ENCODE measurements at regions of chr9 and their contacts with region 1.

Region 1: GRCh38 chr9:86222667-86223066 is 36.8 kb downstream of the C9orf153 start:
- DNase-seq: no peak
- ATAC-seq: no peak
- H3K4me3 ChIP-seq: no peak overlapping the region
- H3K4me3 Mint-ChIP-seq: no peak overlapping the region
- H3K27ac ChIP-seq: no peak overlapping the region
- H3K27ac Mint-ChIP-seq: no peak overlapping the region
- H3K4me1 ChIP-seq: no peaks in the 10 kb centered on the region
- H3K4me1 Mint-ChIP-seq: no peaks in the 10 kb centered on the region
- H3K27me3 ChIP-seq: no peaks in the 10 kb centered on the region
- H3K27me3 Mint-ChIP-seq: peaks cover 2% of the 10 kb centered on the region
- CTCF ChIP-seq: no peak

Region 2: DNA sequence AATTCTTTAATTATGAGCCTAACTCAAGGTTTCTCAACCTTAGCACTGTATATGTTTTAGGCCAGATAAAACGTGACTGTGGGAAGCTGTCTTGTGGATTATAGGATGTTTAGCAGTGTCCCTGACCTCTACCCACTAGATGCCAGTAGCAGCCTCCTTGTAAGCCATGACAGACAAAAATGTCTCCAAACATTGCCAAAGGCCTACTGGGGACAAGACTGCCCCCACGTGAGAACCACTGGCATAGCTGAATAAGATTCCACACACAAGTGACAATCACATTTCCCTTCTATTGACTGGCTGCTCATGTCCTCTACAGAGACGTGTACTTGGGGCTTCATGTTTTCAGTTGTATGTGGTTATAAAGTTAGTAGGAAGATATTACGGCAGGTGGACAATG is 178.7 kb before region 1 on chr9:
- CTCF ChIA-PET with region 1: no interaction called
- POLR2A ChIA-PET with region 1: no interaction called
- intact Hi-C with region 1: no loop called
- DNase-seq: peak in 1 of 9 experiments; percentile 23
- ATAC-seq: no peak
- H3K4me3 ChIP-seq: no peak overlapping the region
- H3K4me3 Mint-ChIP-seq: no peak overlapping the region
- H3K27ac ChIP-seq: no peak overlapping the region
- H3K27ac Mint-ChIP-seq: no peak overlapping the region
- H3K4me1 ChIP-seq: no peaks in the 10 kb centered on the region
- H3K4me1 Mint-ChIP-seq: no peaks in the 10 kb centered on the region
- H3K27me3 ChIP-seq: no peaks in the 10 kb centered on the region
- H3K27me3 Mint-ChIP-seq: peaks cover 3% of the 10 kb centered on the region
- CTCF ChIP-seq: no peak

Region 3: GRCh38 chr9:86389628-86390027 is 167.0 kb after region 1 on chr9:
- CTCF ChIA-PET with region 1: no interaction called
- POLR2A ChIA-PET with region 1: no interaction called
- intact Hi-C with region 1: loop called in 1 of 2 experiments (anchors 5 kb)
- DNase-seq: no peak
- ATAC-seq: no peak
- H3K4me3 ChIP-seq: no peak overlapping the region
- H3K4me3 Mint-ChIP-seq: no peak overlapping the region
- H3K27ac ChIP-seq: no peak overlapping the region
- H3K27ac Mint-ChIP-seq: no peak overlapping the region
- H3K4me1 ChIP-seq: no peaks in the 10 kb centered on the region
- H3K4me1 Mint-ChIP-seq: no peaks in the 10 kb centered on the region
- H3K27me3 ChIP-seq: peaks cover 0 to 4% of the 10 kb centered on the region in 2 experiments
- H3K27me3 Mint-ChIP-seq: peaks cover 37% of the 10 kb centered on the region
- CTCF ChIP-seq: no peak